CD4-positive, alpha-beta memory T cell (primary cell): ENCODE measurements at regions of chr11 and their contacts with region 1.

Region 1: GRCh38 chr11:36746886-36747710 is 149.1 kb upstream of the RAG2 start:
- DNase-seq: peak; percentile 73 to 82 (median 80)
- H3K4me3 ChIP-seq: no peak overlapping the region
- H3K4me3 Mint-ChIP-seq: no peak overlapping the region
- H3K27ac ChIP-seq: no peak overlapping the region
- H3K27ac Mint-ChIP-seq: no peak overlapping the region
- H3K4me1 ChIP-seq: no peaks in the 10 kb centered on the region
- H3K4me1 Mint-ChIP-seq: peaks cover 6 to 11% (median 8%) of the 10 kb centered on the region in 4 donors
- H3K27me3 ChIP-seq: no peaks in the 10 kb centered on the region
- H3K27me3 Mint-ChIP-seq: peaks cover 15 to 31% of the 10 kb centered on the region in 2 donors

Region 2: GRCh38 chr11:36577859-36578258 is 169.2 kb before region 1 on chr11:
- CTCF ChIA-PET with region 1: interaction called, 10 read pairs
- POLR2A ChIA-PET with region 1: no interaction called
- intact Hi-C with region 1: no loop called
- DNase-seq: no peak
- H3K4me3 ChIP-seq: no peak overlapping the region
- H3K4me3 Mint-ChIP-seq: no peak overlapping the region
- H3K27ac ChIP-seq: no peak overlapping the region
- H3K27ac Mint-ChIP-seq: no peak overlapping the region
- H3K4me1 ChIP-seq: no peaks in the 10 kb centered on the region
- H3K4me1 Mint-ChIP-seq: no peaks in the 10 kb centered on the region
- H3K27me3 ChIP-seq: no peaks in the 10 kb centered on the region
- H3K27me3 Mint-ChIP-seq: peaks cover 7 to 9% of the 10 kb centered on the region in 2 donors

Region 3: GRCh38 chr11:36702330-36703055 is 44.6 kb before region 1 on chr11:
- CTCF ChIA-PET with region 1: interaction called, 14 read pairs
- POLR2A ChIA-PET with region 1: no interaction called
- intact Hi-C with region 1: loop called (anchors 1 kb)
- DNase-seq: peak in 2 of 5 donors; percentile 3 to 7
- H3K4me3 ChIP-seq: no peak overlapping the region
- H3K4me3 Mint-ChIP-seq: no peak overlapping the region
- H3K27ac ChIP-seq: no peak overlapping the region
- H3K27ac Mint-ChIP-seq: no peak overlapping the region
- H3K4me1 ChIP-seq: no peaks in the 10 kb centered on the region
- H3K4me1 Mint-ChIP-seq: no peaks in the 10 kb centered on the region
- H3K27me3 ChIP-seq: no peaks in the 10 kb centered on the region
- H3K27me3 Mint-ChIP-seq: peaks cover 6 to 15% of the 10 kb centered on the region in 2 donors

Region 4: DNA sequence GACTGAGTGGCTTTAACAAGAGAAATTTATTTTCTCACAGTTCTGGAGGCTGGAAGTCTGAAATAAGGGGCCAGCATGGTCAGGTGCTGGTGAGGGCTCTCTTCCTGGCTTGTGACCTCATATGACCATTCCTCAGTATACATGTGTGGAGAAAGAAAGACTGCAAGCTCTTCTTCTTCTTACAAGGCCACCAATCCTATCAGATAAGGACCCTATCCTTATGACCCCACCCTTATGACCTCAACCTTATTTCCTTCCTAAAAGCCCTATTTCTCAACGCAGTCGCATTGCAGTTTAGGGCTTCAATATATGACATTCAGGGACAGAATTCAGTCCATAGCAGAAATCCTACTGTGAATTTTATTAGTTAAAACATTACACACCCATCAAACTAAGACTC is 24.7 kb before region 1 on chr11:
- CTCF ChIA-PET with region 1: interaction called, 12 read pairs
- POLR2A ChIA-PET with region 1: no interaction called
- intact Hi-C with region 1: no loop called
- DNase-seq: no peak
- H3K4me3 ChIP-seq: no peak overlapping the region
- H3K4me3 Mint-ChIP-seq: no peak overlapping the region
- H3K27ac ChIP-seq: no peak overlapping the region
- H3K27ac Mint-ChIP-seq: no peak overlapping the region
- H3K4me1 ChIP-seq: no peaks in the 10 kb centered on the region
- H3K4me1 Mint-ChIP-seq: no peaks in the 10 kb centered on the region
- H3K27me3 ChIP-seq: no peaks in the 10 kb centered on the region
- H3K27me3 Mint-ChIP-seq: peaks cover 12 to 21% of the 10 kb centered on the region in 2 donors

Region 5: DNA sequence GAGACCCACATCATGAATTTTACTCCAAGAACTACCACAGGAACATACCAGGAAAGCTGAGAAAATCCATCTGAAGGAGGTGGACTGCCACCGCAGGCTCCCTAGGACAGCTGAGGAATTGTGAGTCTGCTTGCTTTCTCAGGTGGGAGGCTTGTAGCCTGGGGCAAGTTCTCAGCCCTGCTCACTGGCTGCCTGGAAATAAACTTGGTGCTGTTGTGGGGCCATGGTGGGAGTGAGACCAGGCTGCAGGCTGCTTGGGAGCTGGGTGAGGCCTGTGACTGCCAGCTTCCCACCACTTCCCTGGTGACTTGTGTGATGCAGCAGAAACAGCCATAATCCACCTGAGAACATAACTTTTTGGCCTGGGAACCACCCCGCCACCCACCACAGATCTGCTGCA is 16.3 kb before region 1 on chr11:
- CTCF ChIA-PET with region 1: interaction called, 106 read pairs
- POLR2A ChIA-PET with region 1: no interaction called
- intact Hi-C with region 1: no loop called
- DNase-seq: no peak
- H3K4me3 ChIP-seq: no peak overlapping the region
- H3K4me3 Mint-ChIP-seq: no peak overlapping the region
- H3K27ac ChIP-seq: no peak overlapping the region
- H3K27ac Mint-ChIP-seq: no peak overlapping the region
- H3K4me1 ChIP-seq: no peaks in the 10 kb centered on the region
- H3K4me1 Mint-ChIP-seq: no peaks in the 10 kb centered on the region
- H3K27me3 ChIP-seq: no peaks in the 10 kb centered on the region
- H3K27me3 Mint-ChIP-seq: peaks cover 8 to 11% of the 10 kb centered on the region in 2 donors